MCF 10A (cell line): ENCODE measurements at regions of chr5 and their contacts with region 1.

Region 1: DNA sequence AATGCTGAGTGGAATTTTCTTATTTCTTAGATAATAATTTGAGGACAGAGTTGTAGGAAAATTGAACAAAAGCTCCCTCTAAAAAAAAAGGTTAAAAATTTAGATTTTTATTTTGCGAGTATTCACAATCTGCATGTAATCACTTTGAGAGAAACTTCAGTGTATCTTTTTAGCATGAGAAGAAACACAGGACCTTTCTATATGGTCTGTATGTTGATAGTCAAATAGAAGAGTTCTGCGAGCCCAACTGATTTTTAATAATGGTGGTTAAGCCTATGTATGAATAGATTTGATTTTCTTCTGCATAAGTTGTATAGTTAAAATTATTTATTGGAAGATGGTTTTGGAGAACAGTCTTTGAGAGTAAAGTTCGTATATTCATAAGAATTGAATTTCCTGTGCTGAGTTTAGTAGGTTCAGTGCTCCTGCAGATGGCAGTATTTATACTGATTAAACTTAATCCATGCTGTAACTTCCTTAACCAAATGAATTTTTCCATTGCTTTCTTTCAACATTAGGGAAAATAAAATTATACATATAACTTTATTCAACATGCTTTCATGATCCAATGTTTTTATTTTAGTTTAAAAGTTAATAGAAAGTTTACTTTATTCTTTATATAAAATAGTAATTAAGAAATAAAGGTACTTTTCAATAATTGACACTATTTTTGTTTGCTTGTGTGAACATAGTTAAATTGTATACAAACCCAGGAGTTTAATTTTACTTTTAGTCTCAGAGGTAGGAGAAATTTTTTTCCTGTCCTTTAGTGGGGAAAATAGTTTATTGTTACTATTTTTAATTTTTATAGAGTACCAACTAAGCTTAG is 19.6 kb downstream of the TCERG1 start:
- DNase-seq: peak; percentile 32
- H3K4me3 Mint-ChIP-seq: no peak overlapping the region
- H3K27ac Mint-ChIP-seq: no peak overlapping the region
- H3K4me1 Mint-ChIP-seq: peaks cover 28% of the 10 kb centered on the region
- H3K27me3 Mint-ChIP-seq: no peaks in the 10 kb centered on the region
- CTCF ChIP-seq: peak; percentile 46

Region 2: GRCh38 chr5:146203011-146203871 is 263.5 kb before region 1 on chr5 and contains the start of gene RBM27:
- CTCF ChIA-PET with region 1: no interaction called
- POLR2A ChIA-PET with region 1: no interaction called
- intact Hi-C with region 1: no loop called
- DNase-seq: peak; percentile 100
- H3K4me3 Mint-ChIP-seq: no peak within 1 kb of the TSS
- H3K27ac Mint-ChIP-seq: no peak within 1 kb of the TSS
- H3K4me1 Mint-ChIP-seq: peaks cover 5% of the 10 kb centered on the region
- H3K27me3 Mint-ChIP-seq: no peaks in the 10 kb centered on the region
- CTCF ChIP-seq: no peak
- total RNA-seq, gene RBM27: 25.6 and 27.9 TPM in 2 replicates

Region 3: GRCh38 chr5:146273109-146273508 is 193.6 kb before region 1 on chr5:
- CTCF ChIA-PET with region 1: no interaction called
- POLR2A ChIA-PET with region 1: no interaction called
- intact Hi-C with region 1: no loop called
- DNase-seq: no peak
- H3K4me3 Mint-ChIP-seq: no peak overlapping the region
- H3K27ac Mint-ChIP-seq: no peak overlapping the region
- H3K4me1 Mint-ChIP-seq: no peaks in the 10 kb centered on the region
- H3K27me3 Mint-ChIP-seq: no peaks in the 10 kb centered on the region
- CTCF ChIP-seq: no peak

Region 4: GRCh38 chr5:146446853-146447733 is 19.6 kb before region 1 on chr5 and contains the start of gene TCERG1:
- CTCF ChIA-PET with region 1: interaction called, 18 read pairs
- POLR2A ChIA-PET with region 1: interaction called, 8 read pairs
- intact Hi-C with region 1: no loop called
- DNase-seq: peak; percentile 100
- H3K4me3 Mint-ChIP-seq: peak within 1 kb of the TSS; percentile 97
- H3K27ac Mint-ChIP-seq: peak within 1 kb of the TSS; percentile 99
- H3K4me1 Mint-ChIP-seq: peaks cover 36% of the 10 kb centered on the region
- H3K27me3 Mint-ChIP-seq: no peaks in the 10 kb centered on the region
- CTCF ChIP-seq: peak; percentile 63
- total RNA-seq, gene TCERG1: 128 and 134 TPM in 2 replicates

Region 5: DNA sequence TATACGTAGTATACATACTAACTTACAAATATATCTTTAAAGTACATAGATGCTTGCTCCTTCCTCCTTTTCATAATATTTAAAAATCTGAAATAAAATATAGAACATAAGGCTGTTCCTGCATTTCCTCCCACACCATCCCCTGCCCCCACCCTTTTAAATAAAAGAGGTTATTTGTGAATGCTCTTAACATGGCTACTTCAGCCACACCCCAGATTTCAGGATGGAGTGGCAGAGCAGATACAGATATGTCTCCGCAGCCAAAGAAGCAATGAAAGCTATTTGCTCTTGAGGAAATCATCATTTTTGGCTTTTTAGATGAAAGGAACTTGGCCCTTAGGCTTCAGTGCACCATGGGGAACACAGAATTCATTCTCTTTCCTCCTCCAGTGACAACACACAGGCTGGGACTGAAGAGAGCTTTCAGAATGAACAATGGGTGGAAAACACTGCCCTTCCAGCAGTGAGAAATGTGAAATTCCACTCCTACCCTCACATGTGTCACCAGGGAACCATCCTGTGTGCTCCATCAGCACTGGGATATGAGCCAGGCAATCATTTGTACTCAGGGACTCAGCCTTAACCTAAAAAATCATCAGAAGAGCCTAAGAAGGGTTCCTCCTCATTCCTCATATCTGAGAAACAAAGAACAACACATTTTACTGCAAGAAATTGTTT is 277.5 kb after region 1 on chr5:
- CTCF ChIA-PET with region 1: no interaction called
- POLR2A ChIA-PET with region 1: no interaction called
- intact Hi-C with region 1: no loop called
- DNase-seq: no peak
- H3K4me3 Mint-ChIP-seq: no peak overlapping the region
- H3K27ac Mint-ChIP-seq: no peak overlapping the region
- H3K4me1 Mint-ChIP-seq: no peaks in the 10 kb centered on the region
- H3K27me3 Mint-ChIP-seq: no peaks in the 10 kb centered on the region
- CTCF ChIP-seq: no peak